Left lung (tissue), 14 donors: ENCODE measurements at regions of chr4 and their contacts with region 1.

Region 1: GRCh38 chr4:113761620-113762185 is at the start of gene CAMK2D:
- DNase-seq: peak; percentile 88 to 94 (median 93)
- ATAC-seq: peak; percentile 80
- H3K4me3 ChIP-seq: peak within 1 kb of the TSS; percentile 64 to 79
- H3K27ac ChIP-seq: peak within 1 kb of the TSS; percentile 98 to 100
- H3K4me1 ChIP-seq: peaks cover 2 to 35% of the 10 kb centered on the region in 2 donors
- H3K27me3 ChIP-seq: peaks cover 0 to 18% of the 10 kb centered on the region in 2 donors
- CTCF ChIP-seq: peak in 1 of 2 donors; percentile 32
- polyA plus RNA-seq, gene CAMK2D: 65.6 to 93.2 (median 72.4) TPM

Region 2: GRCh38 chr4:113394730-113395530 is 366.8 kb before region 1 on chr4:
- intact Hi-C with region 1: loop called in 1 of 2 experiments (anchors 10 kb)
- DNase-seq: peak in 3 of 4 donors; percentile 31 to 88 (median 81)
- ATAC-seq: peak; percentile 100
- H3K4me3 ChIP-seq: no peak overlapping the region
- H3K27ac ChIP-seq: no peak overlapping the region
- H3K4me1 ChIP-seq: no peaks in the 10 kb centered on the region
- H3K27me3 ChIP-seq: no peaks in the 10 kb centered on the region
- CTCF ChIP-seq: peak; percentile 73 to 83

Region 3: GRCh38 chr4:113547487-113548042 is 214.1 kb before region 1 on chr4:
- intact Hi-C with region 1: loop called in 1 of 2 experiments (anchors 10 kb)
- DNase-seq: peak; percentile 63 to 89 (median 84)
- ATAC-seq: peak; percentile 100
- H3K4me3 ChIP-seq: no peak overlapping the region
- H3K27ac ChIP-seq: peak overlapping the region; percentile 45 to 69
- H3K4me1 ChIP-seq: peaks cover 0 to 14% of the 10 kb centered on the region in 2 donors
- H3K27me3 ChIP-seq: no peaks in the 10 kb centered on the region
- CTCF ChIP-seq: peak; percentile 92 to 97

Region 4: GRCh38 chr4:113908829-113909228 is 147.1 kb after region 1 on chr4:
- intact Hi-C with region 1: no loop called
- DNase-seq: peak in 1 of 4 donors; percentile 2
- ATAC-seq: no peak
- H3K4me3 ChIP-seq: no peak overlapping the region
- H3K27ac ChIP-seq: no peak overlapping the region
- H3K4me1 ChIP-seq: no peaks in the 10 kb centered on the region
- H3K27me3 ChIP-seq: no peaks in the 10 kb centered on the region
- CTCF ChIP-seq: no peak

Region 5: GRCh38 chr4:113919611-113920010 is 157.9 kb after region 1 on chr4:
- intact Hi-C with region 1: no loop called
- DNase-seq: no peak
- ATAC-seq: no peak
- H3K4me3 ChIP-seq: no peak overlapping the region
- H3K27ac ChIP-seq: no peak overlapping the region
- H3K4me1 ChIP-seq: peaks cover 0 to 4% of the 10 kb centered on the region in 2 donors
- H3K27me3 ChIP-seq: no peaks in the 10 kb centered on the region
- CTCF ChIP-seq: no peak

Region 6: DNA sequence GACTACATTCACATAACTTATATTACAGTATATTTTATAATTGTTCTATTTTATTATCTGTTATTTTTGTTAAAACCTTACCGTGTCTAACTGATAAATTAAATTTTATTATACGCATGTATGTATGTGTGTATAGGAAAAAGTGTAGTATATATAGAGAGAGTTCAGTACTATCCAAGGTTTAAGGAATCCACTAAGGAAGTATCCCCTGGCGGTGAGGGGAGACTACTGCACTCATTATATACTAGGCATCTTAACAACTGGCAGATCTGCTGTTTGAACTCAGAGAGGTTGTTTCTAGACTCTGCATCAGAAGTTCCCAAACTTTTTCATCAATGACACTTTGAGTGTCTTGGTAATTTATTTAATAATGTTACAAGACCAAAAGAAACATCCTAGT is 1280.8 kb after region 1 on chr4:
- intact Hi-C with region 1: no loop called
- DNase-seq: no peak
- ATAC-seq: no peak
- H3K4me3 ChIP-seq: no peak overlapping the region
- H3K27ac ChIP-seq: no peak overlapping the region
- H3K4me1 ChIP-seq: no peaks in the 10 kb centered on the region
- H3K27me3 ChIP-seq: no peaks in the 10 kb centered on the region
- CTCF ChIP-seq: no peak